ENCODE measurements at regions of chr12 and their contacts with region 1.

Region 1: GRCh38 chr12:114562654-114563053 is 121.3 kb downstream of the TBX3 start:
- DNase-seq: no peak
- H3K4me3 ChIP-seq: no peak overlapping the region
- H3K27ac ChIP-seq: no peak overlapping the region
- H3K4me1 ChIP-seq: no peaks in the 10 kb centered on the region
- H3K27me3 ChIP-seq: no peaks in the 10 kb centered on the region
- CTCF ChIP-seq: no peak
- POLR2A ChIP-seq: no peak

Region 2: DNA sequence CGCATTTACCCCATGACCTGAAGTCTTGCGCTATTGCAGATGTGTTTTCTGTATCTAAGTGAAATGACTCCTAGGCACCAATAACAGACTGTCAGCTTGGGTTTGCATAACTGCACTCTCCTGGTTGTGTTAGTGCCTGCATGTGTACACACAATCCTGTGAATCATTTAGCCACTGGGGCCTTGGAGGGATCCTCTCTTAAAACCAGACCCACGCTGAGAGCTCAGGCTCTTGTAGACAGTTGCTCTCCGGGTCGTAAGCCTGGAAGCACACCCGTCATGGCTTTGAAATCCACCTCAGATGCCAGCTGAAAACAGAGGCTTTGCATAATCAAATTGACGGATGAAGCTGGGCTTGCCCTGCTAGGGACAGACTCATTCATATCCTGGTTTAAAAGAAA is 517.3 kb before region 1 on chr12:
- intact Hi-C with region 1: loop called (anchors 5 kb)
- DNase-seq: no peak
- H3K4me3 ChIP-seq: no peak overlapping the region
- H3K27ac ChIP-seq: no peak overlapping the region
- H3K4me1 ChIP-seq: no peaks in the 10 kb centered on the region
- H3K27me3 ChIP-seq: peaks cover 0 to 27% of the 10 kb centered on the region in 2 donors
- CTCF ChIP-seq: no peak
- POLR2A ChIP-seq: no peak

Region 3: GRCh38 chr12:115583591-115583990 is 1020.9 kb after region 1 on chr12:
- intact Hi-C with region 1: no loop called
- DNase-seq: no peak
- H3K4me3 ChIP-seq: no peak overlapping the region
- H3K27ac ChIP-seq: no peak overlapping the region
- H3K4me1 ChIP-seq: no peaks in the 10 kb centered on the region
- H3K27me3 ChIP-seq: no peaks in the 10 kb centered on the region
- CTCF ChIP-seq: no peak
- POLR2A ChIP-seq: no peak